ENCODE measurements at regions of chr12 and their contacts with region 1.

Region 1: DNA sequence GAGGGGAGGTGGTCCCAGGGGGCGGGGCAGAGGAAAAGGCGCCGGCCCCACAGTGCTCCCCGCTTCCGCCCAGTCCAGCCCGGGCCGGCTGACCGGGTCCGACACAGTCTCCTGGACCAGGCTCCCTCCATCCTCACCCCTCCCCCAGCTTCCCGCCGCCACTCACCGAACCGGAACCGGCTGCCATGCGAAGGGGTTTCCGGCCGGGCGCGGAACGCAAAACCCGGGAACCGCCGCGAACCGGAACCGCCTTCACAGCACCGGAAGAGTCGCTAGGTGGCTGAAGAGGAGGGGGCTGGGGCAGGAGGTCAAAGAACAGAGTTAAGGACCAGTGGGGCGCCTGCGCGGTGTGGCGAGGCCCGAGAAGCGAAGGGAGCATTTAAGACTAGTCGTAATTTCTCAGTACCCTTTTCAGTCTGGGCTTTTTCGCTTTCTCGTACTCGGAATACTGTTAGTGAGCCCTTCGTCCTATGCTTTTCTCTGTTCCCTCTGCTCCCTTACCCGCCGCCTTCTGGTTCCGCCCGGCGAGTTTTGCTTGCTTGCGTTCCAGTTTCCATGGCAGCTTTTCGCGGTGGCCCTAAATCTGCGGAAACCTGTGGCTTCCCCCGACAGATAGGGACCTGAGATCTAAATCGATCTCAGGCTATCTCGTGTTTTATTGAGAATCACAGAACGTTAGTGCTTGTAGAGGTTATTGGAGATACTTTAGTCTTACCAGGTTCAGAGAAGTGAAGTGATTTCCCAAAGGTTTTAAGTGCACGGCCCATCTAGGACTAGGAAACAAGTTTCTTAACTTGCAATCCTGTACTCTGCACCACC is at the start of gene SENP1:
- DNase-seq: peak; percentile 94
- H3K4me3 Mint-ChIP-seq: peak within 1 kb of the TSS; percentile 86
- H3K27ac Mint-ChIP-seq: peak within 1 kb of the TSS; percentile 94
- H3K4me1 Mint-ChIP-seq: peaks cover 47% of the 10 kb centered on the region
- H3K27me3 Mint-ChIP-seq: no peaks in the 10 kb centered on the region
- total RNA-seq, gene SENP1: 37.7 to 41.6 TPM

Region 2: DNA sequence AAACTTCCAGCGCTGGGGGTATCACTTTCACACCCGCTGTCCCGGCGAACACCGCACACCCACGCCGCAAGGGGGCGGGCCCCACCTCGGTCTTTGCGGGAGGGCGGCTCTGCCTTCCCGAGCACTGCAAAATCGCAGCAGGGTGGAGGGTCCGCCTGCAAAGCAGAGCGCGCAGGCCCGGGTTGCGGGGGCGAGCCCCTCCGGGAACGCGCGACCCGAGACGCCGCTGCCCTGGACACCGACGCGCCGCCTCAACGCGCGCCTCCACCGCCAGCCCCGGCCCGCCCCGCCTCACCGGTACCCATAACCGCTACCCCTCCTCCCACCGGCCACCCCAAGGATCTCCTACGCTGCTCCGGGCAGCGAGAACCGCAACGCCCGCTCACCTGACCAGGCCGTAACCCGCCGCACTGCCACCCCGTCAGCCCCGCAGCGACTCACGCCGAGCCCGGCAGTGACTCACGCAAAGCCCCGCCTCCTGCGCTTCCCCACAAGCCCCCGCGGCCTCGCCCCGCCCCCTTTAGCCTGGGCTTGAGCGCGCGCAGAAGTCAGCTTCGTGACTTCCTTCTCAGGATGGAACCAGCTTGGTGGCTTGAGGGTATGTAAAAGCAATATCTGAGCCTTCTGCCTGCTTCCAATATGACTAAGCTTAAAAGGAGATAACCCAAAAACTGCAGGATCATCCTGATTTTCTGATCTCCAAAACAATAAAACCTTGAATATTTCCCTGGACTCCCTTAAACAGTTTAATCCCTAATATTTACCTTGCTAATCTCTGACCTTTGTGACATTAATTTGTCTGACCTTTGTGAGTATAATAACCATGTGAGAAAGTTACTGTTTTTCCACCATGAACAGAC is 400.3 kb before region 1 on chr12 and contains the start of gene RPAP3:
- CTCF ChIA-PET with region 1: no interaction called
- POLR2A ChIA-PET with region 1: interaction called, 3 read pairs
- intact Hi-C with region 1: loop called (anchors 1 kb)
- DNase-seq: peak; percentile 99
- H3K4me3 Mint-ChIP-seq: peak within 1 kb of the TSS; percentile 96
- H3K27ac Mint-ChIP-seq: peak within 1 kb of the TSS; percentile 95
- H3K4me1 Mint-ChIP-seq: peaks cover 50% of the 10 kb centered on the region
- H3K27me3 Mint-ChIP-seq: no peaks in the 10 kb centered on the region
- total RNA-seq, gene RPAP3: 49.4 to 50.2 TPM

Region 3: GRCh38 chr12:48119078-48119833 is 13.2 kb after region 1 on chr12 and contains the start of gene PFKM:
- CTCF ChIA-PET with region 1: no interaction called
- POLR2A ChIA-PET with region 1: interaction called, 14 read pairs
- intact Hi-C with region 1: loop called (anchors 1 kb)
- DNase-seq: peak; percentile 85
- H3K4me3 Mint-ChIP-seq: peak within 1 kb of the TSS; percentile 99
- H3K27ac Mint-ChIP-seq: peak within 1 kb of the TSS; percentile 76
- H3K4me1 Mint-ChIP-seq: peaks cover 19% of the 10 kb centered on the region
- H3K27me3 Mint-ChIP-seq: peaks cover 3% of the 10 kb centered on the region
- total RNA-seq, gene PFKM: 55.6 to 56.1 TPM

Region 4: DNA sequence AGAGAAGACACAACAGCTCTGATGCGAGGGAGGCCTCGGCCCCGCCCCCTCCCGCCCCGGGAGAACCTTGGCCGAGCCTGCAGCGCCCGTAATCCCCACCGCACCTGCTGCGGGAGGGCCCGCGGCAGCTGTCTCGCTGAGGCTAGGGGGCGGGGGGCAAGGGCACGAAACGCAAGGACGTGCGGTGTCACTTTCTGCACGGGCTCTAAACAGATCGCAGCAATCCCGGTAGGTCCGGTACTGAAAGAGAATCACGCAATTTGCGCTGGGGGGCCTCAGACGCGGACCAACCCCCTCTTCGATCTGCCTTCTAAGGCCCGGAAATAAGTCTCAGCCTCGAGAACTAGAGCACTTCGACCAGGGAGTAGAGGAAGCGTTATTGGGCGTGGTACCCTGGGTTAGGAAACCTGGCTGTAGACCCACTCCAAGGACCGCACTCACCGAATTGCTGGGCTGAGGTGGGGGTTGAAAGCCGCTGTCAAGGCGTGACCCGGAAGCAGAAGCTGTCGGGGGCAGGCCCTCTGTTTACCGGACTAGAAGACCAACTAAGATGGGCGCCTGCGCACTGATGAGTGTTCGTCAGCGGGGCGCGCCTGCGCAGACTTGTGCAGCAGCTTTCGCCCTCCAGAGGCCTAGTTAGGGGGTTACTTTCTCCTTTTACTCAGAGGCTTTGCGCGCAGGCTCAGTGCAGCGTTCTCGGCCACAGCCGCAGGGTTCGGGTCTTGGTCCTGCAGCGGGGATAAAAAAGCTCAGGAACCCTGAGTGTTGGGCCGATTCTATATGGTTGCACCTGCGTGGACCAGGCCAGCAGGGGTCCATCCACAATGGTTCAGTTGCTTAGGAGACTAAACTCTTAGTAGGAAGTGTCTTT is 51.2 kb after region 1 on chr12 and contains the start of gene ASB8:
- CTCF ChIA-PET with region 1: interaction called, 5 read pairs
- POLR2A ChIA-PET with region 1: interaction called, 25 read pairs
- intact Hi-C with region 1: loop called (anchors 1 kb)
- DNase-seq: peak; percentile 100
- H3K4me3 Mint-ChIP-seq: peak within 1 kb of the TSS; percentile 94
- H3K27ac Mint-ChIP-seq: peak within 1 kb of the TSS; percentile 96
- H3K4me1 Mint-ChIP-seq: peaks cover 37% of the 10 kb centered on the region
- H3K27me3 Mint-ChIP-seq: no peaks in the 10 kb centered on the region
- total RNA-seq, gene ASB8: 31.4 to 33.6 TPM

Measured in activated CD4-positive, alpha-beta memory T cell treated with anti-CD3 and anti-CD28 coated beads for 36 hours (primary cell).